Activated CD8-positive, alpha-beta T cell treated with anti-CD3 and anti-CD28 coated beads for 36 hours (primary cell): ENCODE measurements at regions of chr17 and their contacts with region 1.

Region 1: DNA sequence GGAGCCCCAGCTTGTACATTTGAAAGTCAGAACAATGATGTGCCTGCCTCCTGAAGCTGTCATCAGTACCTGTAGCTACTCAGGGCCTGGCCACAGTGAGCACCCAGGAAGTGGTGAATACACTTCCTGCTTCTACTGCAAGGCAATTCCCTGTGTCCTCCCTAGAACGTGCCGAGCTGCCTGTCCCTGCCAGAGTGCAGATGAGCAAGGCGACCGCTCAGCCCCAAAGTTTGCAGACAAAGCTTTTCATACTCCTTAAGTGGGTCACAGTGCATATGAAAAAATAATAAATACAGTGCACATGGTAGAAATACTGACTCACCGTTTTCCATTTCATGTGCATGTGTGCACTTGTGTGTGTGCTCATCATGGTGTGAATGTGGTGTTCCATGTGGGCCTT is 77.3 kb downstream of the MPRIP start:
- DNase-seq: peak; percentile 84
- ATAC-seq: peak; percentile 88
- H3K4me3 Mint-ChIP-seq: no peak overlapping the region
- H3K27ac Mint-ChIP-seq: peak overlapping the region; percentile 93
- H3K4me1 Mint-ChIP-seq: peaks cover 87% of the 10 kb centered on the region
- H3K27me3 Mint-ChIP-seq: no peaks in the 10 kb centered on the region
- CTCF ChIP-seq: no peak

Region 2: DNA sequence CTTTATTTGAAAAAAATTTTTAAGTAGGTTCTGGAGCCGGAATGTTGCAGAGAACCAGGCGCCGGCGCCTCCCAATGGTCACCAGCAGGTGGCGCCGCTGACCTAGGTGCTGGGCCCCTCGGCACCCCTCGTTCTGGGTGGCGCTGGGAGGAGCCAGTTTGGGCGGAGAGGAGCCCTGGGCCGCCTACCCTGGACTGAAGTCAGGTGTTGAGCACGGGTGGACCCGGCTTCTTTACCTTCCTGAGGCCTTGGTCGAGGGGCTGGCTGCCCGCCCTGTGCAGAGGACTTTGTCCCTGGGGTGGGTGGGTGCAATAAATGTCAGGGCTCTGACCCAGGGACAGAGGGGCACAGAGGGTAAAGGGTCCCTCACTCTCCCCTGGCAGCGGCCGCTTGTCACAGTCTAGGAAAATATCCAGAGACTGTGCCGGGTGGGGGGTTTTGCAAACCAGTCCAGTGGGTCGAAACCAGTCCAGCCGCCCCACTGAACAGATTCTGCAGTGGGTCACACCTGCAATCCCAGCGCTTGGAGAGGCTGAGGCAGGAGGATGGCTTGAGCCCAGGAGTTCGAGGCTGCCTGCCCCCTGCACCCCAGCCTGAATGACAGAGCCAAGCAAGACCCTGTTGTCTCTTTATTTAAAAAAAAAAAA is 117.5 kb before region 1 on chr17:
- CTCF ChIA-PET with region 1: no interaction called
- POLR2A ChIA-PET with region 1: no interaction called
- intact Hi-C with region 1: loop called (anchors 10 kb)
- DNase-seq: peak; percentile 85
- ATAC-seq: peak; percentile 99
- H3K4me3 Mint-ChIP-seq: no peak overlapping the region
- H3K27ac Mint-ChIP-seq: no peak overlapping the region
- H3K4me1 Mint-ChIP-seq: no peaks in the 10 kb centered on the region
- H3K27me3 Mint-ChIP-seq: no peaks in the 10 kb centered on the region
- CTCF ChIP-seq: peak; percentile 96

Region 3: GRCh38 chr17:17141860-17142552 is 22.5 kb after region 1 on chr17:
- CTCF ChIA-PET with region 1: interaction called, 10 read pairs
- POLR2A ChIA-PET with region 1: no interaction called
- intact Hi-C with region 1: no loop called
- DNase-seq: peak; percentile 56
- ATAC-seq: peak; percentile 69
- H3K4me3 Mint-ChIP-seq: no peak overlapping the region
- H3K27ac Mint-ChIP-seq: peak overlapping the region; percentile 32
- H3K4me1 Mint-ChIP-seq: peaks cover 10% of the 10 kb centered on the region
- H3K27me3 Mint-ChIP-seq: no peaks in the 10 kb centered on the region
- CTCF ChIP-seq: peak; percentile 75